T-cell (primary cell): ENCODE measurements at regions of chr12 and their contacts with region 1.

Region 1: DNA sequence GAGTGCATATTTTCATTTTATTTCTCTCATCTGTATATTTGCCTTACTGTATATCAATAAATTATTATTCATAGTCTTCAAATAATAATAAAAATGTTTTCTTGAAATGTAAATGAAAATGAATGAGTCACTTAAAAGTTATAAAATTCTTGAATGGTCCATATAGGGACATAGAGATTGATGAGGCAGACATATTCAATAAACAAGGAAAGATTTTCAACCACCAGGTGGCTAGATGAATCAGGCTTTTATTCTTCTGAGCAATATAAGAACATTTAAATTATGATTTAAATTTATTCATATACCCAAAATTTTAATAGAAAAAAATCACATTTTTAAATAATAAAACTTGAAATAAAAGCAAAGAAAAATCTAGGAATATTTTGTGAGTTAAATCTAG is 249.5 kb downstream of the ACSS3 start:
- DNase-seq: no peak
- ATAC-seq: no peak
- H3K4me3 ChIP-seq: no peak overlapping the region
- H3K4me3 Mint-ChIP-seq: no peak overlapping the region
- H3K27ac ChIP-seq: no peak overlapping the region
- H3K27ac Mint-ChIP-seq: no peak overlapping the region
- H3K4me1 ChIP-seq: no peaks in the 10 kb centered on the region
- H3K4me1 Mint-ChIP-seq: no peaks in the 10 kb centered on the region
- H3K27me3 ChIP-seq: no peaks in the 10 kb centered on the region
- H3K27me3 Mint-ChIP-seq: no peaks in the 10 kb centered on the region

Region 2: DNA sequence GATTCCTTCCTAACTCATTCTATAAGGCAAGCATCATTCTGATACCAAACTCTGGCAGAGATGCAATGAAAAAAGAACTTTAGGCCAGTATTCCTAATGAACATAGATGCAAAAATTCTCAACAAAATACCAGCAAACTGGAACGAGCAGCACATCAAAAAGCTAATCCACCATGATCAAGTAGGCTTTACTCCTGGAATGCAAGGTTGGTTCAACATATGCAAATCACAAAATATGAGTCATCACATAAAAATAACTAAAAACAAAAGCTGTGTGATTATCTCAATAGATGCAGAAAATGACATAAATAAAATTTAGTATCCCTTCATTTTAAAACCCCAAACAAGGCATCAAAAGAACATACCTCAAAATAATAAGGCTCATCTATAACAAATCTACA is 150.6 kb before region 1 on chr12:
- CTCF ChIA-PET with region 1: no interaction called
- POLR2A ChIA-PET with region 1: interaction called in 1 of 2 experiments, 14 read pairs
- DNase-seq: no peak
- ATAC-seq: no peak
- H3K4me3 ChIP-seq: no peak overlapping the region
- H3K4me3 Mint-ChIP-seq: no peak overlapping the region
- H3K27ac ChIP-seq: no peak overlapping the region
- H3K27ac Mint-ChIP-seq: no peak overlapping the region
- H3K4me1 ChIP-seq: no peaks in the 10 kb centered on the region
- H3K4me1 Mint-ChIP-seq: no peaks in the 10 kb centered on the region
- H3K27me3 ChIP-seq: no peaks in the 10 kb centered on the region
- H3K27me3 Mint-ChIP-seq: no peaks in the 10 kb centered on the region

Region 3: GRCh38 chr12:81300454-81300853 is 27.0 kb before region 1 on chr12:
- CTCF ChIA-PET with region 1: no interaction called
- POLR2A ChIA-PET with region 1: no interaction called
- DNase-seq: no peak
- ATAC-seq: no peak
- H3K4me3 ChIP-seq: no peak overlapping the region
- H3K4me3 Mint-ChIP-seq: no peak overlapping the region
- H3K27ac ChIP-seq: no peak overlapping the region
- H3K27ac Mint-ChIP-seq: no peak overlapping the region
- H3K4me1 ChIP-seq: no peaks in the 10 kb centered on the region
- H3K4me1 Mint-ChIP-seq: no peaks in the 10 kb centered on the region
- H3K27me3 ChIP-seq: no peaks in the 10 kb centered on the region
- H3K27me3 Mint-ChIP-seq: no peaks in the 10 kb centered on the region

Region 4: DNA sequence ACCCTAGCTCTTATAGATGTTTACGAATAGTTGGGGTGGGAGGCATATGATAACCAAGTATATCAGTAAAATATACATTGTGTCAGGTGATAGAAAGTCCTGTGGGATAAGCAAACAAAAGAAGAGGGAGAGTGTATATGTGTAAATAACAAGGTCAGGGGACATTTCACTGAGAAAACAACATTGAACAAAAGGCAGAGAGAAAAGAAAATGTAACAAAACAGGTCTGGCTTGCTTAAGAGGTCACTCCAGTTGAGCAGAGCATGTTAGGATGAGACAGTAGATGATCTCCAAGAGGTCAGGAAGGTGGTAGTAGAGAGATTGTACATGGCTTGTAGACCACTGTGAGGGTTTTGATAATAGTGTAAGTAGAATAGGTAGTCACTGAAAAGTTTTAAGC is 54.6 kb after region 1 on chr12:
- CTCF ChIA-PET with region 1: no interaction called
- POLR2A ChIA-PET with region 1: no interaction called
- DNase-seq: no peak
- ATAC-seq: no peak
- H3K4me3 ChIP-seq: no peak overlapping the region
- H3K4me3 Mint-ChIP-seq: no peak overlapping the region
- H3K27ac ChIP-seq: no peak overlapping the region
- H3K27ac Mint-ChIP-seq: no peak overlapping the region
- H3K4me1 ChIP-seq: no peaks in the 10 kb centered on the region
- H3K4me1 Mint-ChIP-seq: no peaks in the 10 kb centered on the region
- H3K27me3 ChIP-seq: no peaks in the 10 kb centered on the region
- H3K27me3 Mint-ChIP-seq: no peaks in the 10 kb centered on the region